ENCODE measurements at regions of chr9 and their contacts with region 1.

Region 1: GRCh38 chr9:13088720-13089427 is 190.6 kb downstream of the MPDZ start:
- DNase-seq: peak; percentile 42
- H3K4me3 ChIP-seq: peak overlapping the region; percentile 33
- H3K27ac ChIP-seq: no peak overlapping the region
- H3K27me3 ChIP-seq: no peaks in the 10 kb centered on the region
- CTCF ChIP-seq: peak; percentile 69

Region 2: DNA sequence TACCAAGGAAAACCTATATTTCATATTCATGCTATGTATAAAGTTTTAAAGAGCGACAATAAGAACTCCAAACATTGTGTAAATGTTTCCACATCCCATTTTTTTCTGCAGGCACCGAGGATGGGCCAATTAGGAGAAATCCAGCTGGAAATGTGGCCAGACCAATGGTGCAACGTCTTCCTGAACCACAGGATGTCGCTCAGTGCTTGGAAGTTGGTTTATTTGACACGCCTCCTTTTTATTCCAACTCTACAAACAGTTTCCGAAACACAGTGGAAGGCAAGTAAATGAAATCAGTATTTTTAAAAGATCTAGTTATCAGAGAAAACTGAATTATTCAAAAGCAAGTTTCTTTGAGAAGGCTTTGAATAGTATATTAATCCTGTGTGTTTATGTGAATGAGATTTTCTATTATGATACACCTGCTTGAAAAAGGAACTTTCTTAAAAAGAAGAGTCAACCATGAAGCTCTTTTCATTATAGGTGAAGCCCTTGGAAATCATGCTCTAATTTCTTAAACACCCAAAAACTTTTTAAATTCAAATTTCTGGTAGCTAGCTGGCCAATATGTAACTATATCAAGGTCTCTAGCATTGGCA is 386.6 kb before region 1 on chr9:
- in situ Hi-C with region 1: loop called (anchors 25 kb)
- DNase-seq: peak; percentile 67
- H3K4me3 ChIP-seq: no peak overlapping the region
- H3K27ac ChIP-seq: no peak overlapping the region
- H3K27me3 ChIP-seq: no peaks in the 10 kb centered on the region
- CTCF ChIP-seq: peak; percentile 80

Measured in brain microvascular endothelial cell (primary cell).